ENCODE measurements at regions of chr17 and their contacts with region 1.

Region 1: DNA sequence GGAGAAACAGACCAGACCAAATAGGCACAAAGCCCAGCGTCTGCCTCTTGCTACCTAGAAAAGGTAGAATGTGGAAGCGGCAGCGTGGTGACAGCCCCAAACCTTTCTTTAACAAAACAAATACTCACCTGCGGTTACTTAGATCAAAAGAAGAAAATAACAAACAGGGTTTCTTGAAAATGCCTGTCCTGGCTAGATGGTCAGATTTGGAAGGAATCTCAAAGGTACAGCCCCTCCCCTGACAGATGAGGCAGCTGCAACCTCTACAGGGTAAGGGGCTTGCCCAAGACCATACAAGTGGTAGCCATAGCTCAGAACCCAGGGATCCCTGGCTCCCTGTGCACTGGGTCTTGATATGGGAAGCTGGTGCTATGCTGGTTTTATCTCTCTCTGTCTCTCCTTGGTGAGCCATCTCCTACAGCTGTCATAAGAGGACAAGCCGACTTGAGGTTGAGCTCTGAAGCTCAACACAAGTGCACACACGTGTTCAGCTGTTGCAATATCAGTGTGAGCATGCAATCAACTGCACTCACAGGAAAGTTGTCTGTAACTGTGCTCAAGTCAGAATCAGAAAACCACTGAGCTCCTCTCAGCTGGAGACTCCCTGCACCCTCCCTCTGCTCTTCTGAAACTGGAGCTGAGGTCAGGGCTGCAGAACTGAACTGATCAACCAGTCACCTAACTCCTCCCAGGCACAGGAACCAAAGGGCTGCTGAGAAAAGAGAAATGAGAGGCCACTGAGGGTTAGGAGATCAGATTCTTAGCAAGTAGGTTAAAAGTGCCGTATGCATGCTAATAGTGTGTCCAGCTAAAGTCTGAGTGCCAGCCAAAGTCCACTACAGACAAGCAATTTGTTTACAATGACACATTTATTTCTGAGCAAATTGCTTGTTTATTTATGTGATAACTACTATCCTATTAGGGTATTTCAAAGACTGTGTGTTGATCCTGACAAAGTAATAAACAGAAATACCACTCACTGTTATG is 6.1 kb upstream of the RNF157 start:
- DNase-seq: no peak
- H3K27ac ChIP-seq: no peak overlapping the region
- CTCF ChIP-seq: no peak

Region 2: GRCh38 chr17:75827252-75828115 is 418.9 kb before region 1 on chr17:
- CTCF ChIA-PET with region 1: no interaction called
- POLR2A ChIA-PET with region 1: no interaction called
- DNase-seq: peak; percentile 38
- H3K27ac ChIP-seq: peak overlapping the region; percentile 67
- CTCF ChIP-seq: peak; percentile 77

Region 3: GRCh38 chr17:76232342-76232741 is 14.0 kb before region 1 on chr17:
- CTCF ChIA-PET with region 1: no interaction called
- POLR2A ChIA-PET with region 1: no interaction called
- DNase-seq: no peak
- H3K27ac ChIP-seq: no peak overlapping the region
- CTCF ChIP-seq: no peak

Region 4: DNA sequence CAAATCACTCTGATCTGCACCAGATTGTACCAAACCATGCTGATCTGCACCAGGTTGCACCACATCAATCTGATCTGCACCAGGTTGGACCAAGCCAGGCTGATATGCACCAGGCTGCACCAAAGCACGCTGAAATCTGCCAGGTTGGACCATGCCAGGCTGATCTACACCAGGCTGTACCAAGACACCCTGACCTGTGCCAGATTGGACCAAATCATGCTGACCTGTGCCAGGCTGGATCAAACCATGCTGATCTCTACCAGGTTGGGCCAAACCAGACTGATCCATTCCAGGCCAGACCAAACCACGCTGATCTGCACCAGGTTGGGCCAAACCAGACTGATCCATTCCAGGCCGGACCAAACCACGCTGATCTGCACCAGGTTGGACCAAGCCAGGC is 46.2 kb after region 1 on chr17:
- CTCF ChIA-PET with region 1: no interaction called
- POLR2A ChIA-PET with region 1: interaction called, 10 read pairs
- DNase-seq: no peak
- H3K27ac ChIP-seq: no peak overlapping the region
- CTCF ChIP-seq: no peak

Measured in RWPE1 (cell line).